Activated CD4-positive, alpha-beta T cell treated with anti-CD3 and anti-CD28 coated beads, Interleukin-2, amount 10 ng/mL, durations not matched to agents 24 days and 14 days (primary cell): ENCODE measurements at regions of chr14 and their contacts with region 1.

Region 1: DNA sequence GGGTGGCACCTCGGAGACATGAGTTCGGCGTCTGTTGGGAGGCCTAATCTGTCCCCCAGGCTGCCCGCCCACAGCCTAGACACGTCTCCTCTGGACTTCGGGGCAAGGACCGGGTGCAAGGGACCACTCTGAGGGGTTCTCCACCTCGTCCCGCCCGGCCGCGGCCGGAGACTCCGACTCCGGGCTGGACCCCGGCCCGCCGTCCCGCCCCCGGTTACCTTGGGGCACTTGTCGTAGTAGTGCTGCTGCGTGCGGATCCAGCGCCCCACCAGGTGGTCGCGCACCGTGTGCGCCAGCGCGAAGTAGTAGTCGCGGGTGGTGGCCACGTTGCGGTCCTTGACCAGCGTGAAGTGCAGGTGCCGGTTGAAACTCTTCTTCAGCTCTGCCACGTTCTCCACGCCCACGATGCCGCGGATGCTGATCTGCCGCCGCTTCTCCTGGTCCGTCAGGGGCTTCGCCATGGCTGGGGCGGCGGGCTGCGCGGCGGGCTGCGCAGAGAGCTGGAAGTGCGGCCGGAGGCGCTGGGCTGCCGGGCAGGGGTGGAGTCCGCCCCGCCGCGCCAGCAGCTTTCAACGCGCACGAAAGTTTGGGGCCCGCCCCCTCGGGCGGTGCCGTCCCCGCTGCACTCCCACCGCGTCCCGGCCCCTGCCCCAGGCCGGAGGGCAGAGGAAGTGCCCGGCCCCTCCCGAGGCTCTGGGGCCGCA is at the start of gene PYGL:
- DNase-seq: peak; percentile 77
- H3K4me3 Mint-ChIP-seq: peak within 1 kb of the TSS; percentile 86
- H3K27ac Mint-ChIP-seq: peak within 1 kb of the TSS; percentile 53
- H3K4me1 Mint-ChIP-seq: peaks cover 6% of the 10 kb centered on the region
- H3K27me3 Mint-ChIP-seq: peaks cover 39% of the 10 kb centered on the region
- total RNA-seq, gene PYGL: 0.26 and 1.3 TPM in 2 replicates

Region 2: GRCh38 chr14:50726372-50727107 is 217.6 kb before region 1 on chr14:
- intact Hi-C with region 1: no loop called
- DNase-seq: peak; percentile 84
- H3K4me3 Mint-ChIP-seq: peak overlapping the region; percentile 51
- H3K27ac Mint-ChIP-seq: peak overlapping the region; percentile 88
- H3K4me1 Mint-ChIP-seq: peaks cover 24% of the 10 kb centered on the region
- H3K27me3 Mint-ChIP-seq: no peaks in the 10 kb centered on the region

Region 3: GRCh38 chr14:51094901-51095853 is 151.1 kb after region 1 on chr14 and contains the start of gene TRIM9:
- intact Hi-C with region 1: loop called (anchors 10 kb)
- DNase-seq: peak; percentile 97
- H3K4me3 Mint-ChIP-seq: peak within 1 kb of the TSS; percentile 91
- H3K27ac Mint-ChIP-seq: peak within 1 kb of the TSS; percentile 51
- H3K4me1 Mint-ChIP-seq: peaks cover 15% of the 10 kb centered on the region
- H3K27me3 Mint-ChIP-seq: peaks cover 55% of the 10 kb centered on the region
- total RNA-seq, gene TRIM9: 0.47 and 0.52 TPM in 2 replicates